BJ (cell line): ENCODE measurements at regions of chr1 and their contacts with region 1.

Region 1: DNA sequence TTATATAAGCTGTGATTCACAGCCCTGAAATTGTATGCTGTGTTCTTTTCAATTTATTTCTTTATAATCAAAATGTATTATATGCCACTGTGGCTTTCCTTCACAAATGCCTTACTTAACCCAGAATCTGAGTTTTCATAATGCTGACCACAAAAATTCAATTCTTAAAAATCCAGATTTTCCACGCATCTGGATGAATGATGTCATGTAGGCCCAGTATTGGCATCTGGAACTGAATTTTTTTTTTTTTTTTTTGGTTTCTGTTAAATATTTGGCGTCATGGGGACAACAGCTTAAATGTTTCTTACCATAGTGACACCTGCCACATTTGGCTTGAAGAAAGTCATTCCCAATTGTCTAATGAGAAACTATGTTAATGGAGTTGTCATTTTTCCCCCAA is 296.8 kb downstream of the TM2D1 start:
- DNase-seq: peak; percentile 30
- H3K4me3 ChIP-seq: no peak overlapping the region
- H3K27me3 ChIP-seq: no peaks in the 10 kb centered on the region
- CTCF ChIP-seq: no peak

Region 2: GRCh38 chr1:59971464-59971911 is 1456.7 kb before region 1 on chr1:
- CTCF ChIA-PET with region 1: no interaction called
- POLR2A ChIA-PET with region 1: interaction called, 11 read pairs
- DNase-seq: no peak
- H3K4me3 ChIP-seq: no peak overlapping the region
- H3K27me3 ChIP-seq: peaks cover 9% of the 10 kb centered on the region
- CTCF ChIP-seq: peak; percentile 93